Activated naive CD8-positive, alpha-beta T cell treated with anti-CD3 and anti-CD28 coated beads, Interleukin-2, amount 10 ng/mL, durations not matched to agents 7 days and 5 days (primary cell): ENCODE measurements at regions of chr2 and their contacts with region 1.

Region 1: GRCh38 chr2:159712143-159712928 is at the start of gene MARCHF7:
- DNase-seq: peak; percentile 99
- ATAC-seq: peak; percentile 94
- H3K4me3 Mint-ChIP-seq: peak within 1 kb of the TSS; percentile 98
- H3K27ac Mint-ChIP-seq: peak within 1 kb of the TSS; percentile 100
- H3K4me1 Mint-ChIP-seq: peaks cover 39% of the 10 kb centered on the region
- H3K27me3 Mint-ChIP-seq: no peaks in the 10 kb centered on the region
- total RNA-seq, gene MARCHF7: 92.1 to 106 TPM

Region 2: GRCh38 chr2:159286709-159287441 is 425.5 kb before region 1 on chr2:
- POLR2A ChIA-PET with region 1: interaction called, 20 read pairs
- DNase-seq: peak; percentile 98
- ATAC-seq: peak; percentile 97
- H3K4me3 Mint-ChIP-seq: peak overlapping the region; percentile 83
- H3K27ac Mint-ChIP-seq: peak overlapping the region; percentile 81
- H3K4me1 Mint-ChIP-seq: peaks cover 14% of the 10 kb centered on the region
- H3K27me3 Mint-ChIP-seq: no peaks in the 10 kb centered on the region

Region 3: DNA sequence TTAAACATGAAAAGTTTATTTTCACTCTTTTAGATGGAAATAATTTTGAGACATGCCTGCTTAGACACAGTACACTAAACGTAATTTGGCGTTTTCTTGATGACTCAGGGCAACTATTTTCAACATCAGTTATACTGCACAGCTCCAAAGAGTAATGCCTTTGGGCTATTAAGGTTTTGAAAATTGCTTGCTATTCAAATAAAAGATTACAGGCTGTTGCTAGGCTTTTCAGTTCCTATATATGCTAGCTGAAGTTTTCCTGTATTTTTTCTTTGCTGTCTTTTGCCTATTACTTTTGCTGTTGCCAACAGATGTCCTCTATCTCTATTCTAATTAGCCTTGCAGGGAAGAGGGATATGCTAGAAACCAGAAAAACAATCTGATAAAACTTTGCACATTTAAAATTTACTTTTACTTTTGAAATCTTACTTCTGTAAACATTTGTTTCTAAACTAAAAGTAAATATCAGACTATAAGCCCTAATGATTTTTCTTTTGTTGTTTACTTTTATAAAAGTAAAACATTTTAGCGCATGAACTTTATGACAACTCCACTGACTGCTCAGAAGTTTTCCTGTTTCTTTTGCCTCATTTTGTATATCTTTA is 312.4 kb before region 1 on chr2:
- POLR2A ChIA-PET with region 1: no interaction called
- DNase-seq: no peak
- ATAC-seq: no peak
- H3K4me3 Mint-ChIP-seq: no peak overlapping the region
- H3K27ac Mint-ChIP-seq: no peak overlapping the region
- H3K4me1 Mint-ChIP-seq: no peaks in the 10 kb centered on the region
- H3K27me3 Mint-ChIP-seq: no peaks in the 10 kb centered on the region

Region 4: GRCh38 chr2:159516241-159516766 is 196.0 kb before region 1 on chr2:
- POLR2A ChIA-PET with region 1: interaction called, 14 read pairs
- DNase-seq: no peak
- ATAC-seq: peak; percentile 84
- H3K4me3 Mint-ChIP-seq: peak overlapping the region; percentile 65
- H3K27ac Mint-ChIP-seq: peak overlapping the region; percentile 85
- H3K4me1 Mint-ChIP-seq: peaks cover 8% of the 10 kb centered on the region
- H3K27me3 Mint-ChIP-seq: no peaks in the 10 kb centered on the region

Region 5: GRCh38 chr2:159744363-159744762 is 32.0 kb after region 1 on chr2:
- POLR2A ChIA-PET with region 1: no interaction called
- DNase-seq: no peak
- ATAC-seq: no peak
- H3K4me3 Mint-ChIP-seq: no peak overlapping the region
- H3K27ac Mint-ChIP-seq: no peak overlapping the region
- H3K4me1 Mint-ChIP-seq: peaks cover 11% of the 10 kb centered on the region
- H3K27me3 Mint-ChIP-seq: no peaks in the 10 kb centered on the region

Region 6: DNA sequence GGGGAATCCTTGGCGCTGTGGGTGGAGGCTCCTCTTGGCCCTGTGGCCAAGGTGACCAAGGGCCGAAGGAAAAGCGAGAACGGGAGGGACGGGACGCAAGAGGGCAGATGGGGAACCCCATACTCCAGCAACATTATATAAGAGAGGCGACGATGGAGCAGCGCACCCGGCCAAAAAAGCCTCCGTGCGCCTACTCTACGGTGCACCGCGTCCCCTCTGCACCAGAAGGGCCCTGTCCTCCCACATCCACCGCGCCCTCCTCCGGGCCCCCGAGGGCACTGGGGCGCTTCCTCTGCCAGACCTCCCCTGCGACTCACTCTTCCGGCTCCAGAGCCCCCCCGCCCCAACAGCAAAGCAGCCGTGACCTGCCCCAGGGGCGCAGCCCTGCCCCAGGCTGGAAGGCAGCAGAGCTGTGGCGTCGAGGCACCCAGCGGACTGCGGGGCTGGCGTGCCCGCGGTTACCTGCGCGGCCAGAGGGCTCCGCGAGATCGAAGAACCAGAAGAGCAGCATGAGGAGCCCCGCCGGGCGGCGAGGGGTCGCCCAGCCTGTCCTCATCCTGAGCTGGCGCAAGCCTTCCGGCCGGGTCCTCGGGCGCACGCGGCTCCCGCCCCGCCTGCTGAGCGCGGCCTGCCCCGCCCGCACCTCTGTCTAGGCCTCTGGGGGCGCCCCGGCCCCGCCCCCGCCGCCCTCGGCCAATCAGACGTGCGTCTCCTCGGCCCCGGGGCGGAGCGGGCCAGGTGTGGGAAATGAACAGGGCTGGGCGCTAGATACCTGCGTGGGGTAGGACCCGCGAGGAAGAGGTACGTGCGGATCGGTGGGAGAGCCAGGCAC is 192.0 kb after region 1 on chr2:
- POLR2A ChIA-PET with region 1: interaction called, 17 read pairs
- DNase-seq: peak; percentile 88
- ATAC-seq: peak; percentile 89
- H3K4me3 Mint-ChIP-seq: peak within 1 kb of the TSS; percentile 98
- H3K27ac Mint-ChIP-seq: peak within 1 kb of the TSS; percentile 97
- H3K4me1 Mint-ChIP-seq: peaks cover 18% of the 10 kb centered on the region
- H3K27me3 Mint-ChIP-seq: peaks cover 2% of the 10 kb centered on the region